Activated T-helper 1 cell treated with anti-CD3 and anti-CD28 coated beads, Interleukin-12 subunit alpha, Interleukin-12 subunit beta, Interleukin-2, Interleukin-4 antibody, amounts not matched to agents 30 ng/mL and 10 ng/mL and 1 ng/mL, durations not matched to agents 14 hours and 24 hours and 36 hours (primary cell): ENCODE measurements at regions of chr6 and their contacts with region 1.

Region 1: DNA sequence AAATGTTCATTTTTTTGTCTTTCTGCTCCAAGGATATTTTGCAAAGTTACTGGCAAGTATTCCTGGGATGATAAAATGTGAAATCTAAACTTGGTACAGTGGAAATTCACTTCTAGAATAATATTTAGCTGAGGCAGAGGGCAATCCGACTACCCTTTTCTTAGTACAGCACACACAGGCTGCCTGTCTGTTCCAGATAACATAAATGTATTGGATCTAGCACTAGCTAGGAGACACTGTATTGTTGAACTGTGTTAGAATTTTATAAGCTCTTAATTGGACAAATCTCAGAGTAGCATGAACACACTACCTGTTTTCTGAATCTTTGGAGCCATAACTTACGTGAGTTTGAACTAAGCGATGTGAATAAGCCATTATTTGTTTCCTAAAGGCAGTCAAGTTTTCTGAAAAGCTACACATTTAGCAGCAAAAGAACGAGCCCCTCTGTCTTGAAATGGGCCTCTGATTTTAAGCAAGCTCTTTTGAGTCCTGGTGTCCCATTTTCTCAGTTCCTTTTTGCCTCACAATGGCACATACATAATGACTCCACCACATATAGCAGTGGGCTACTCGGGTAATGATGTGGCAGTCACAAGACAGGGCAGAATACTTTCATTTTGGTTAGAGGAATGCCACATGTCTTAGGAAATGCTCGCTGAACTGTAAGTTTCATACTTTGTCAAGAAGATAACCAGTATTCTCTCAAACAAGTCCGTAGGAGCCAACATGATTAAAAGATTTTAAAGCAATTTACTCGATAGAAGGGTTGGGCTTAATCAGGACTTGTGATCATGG is 116.5 kb upstream of the ESR1 start:
- DNase-seq: peak; percentile 45
- H3K4me3 Mint-ChIP-seq: peak overlapping the region; percentile 78
- H3K27ac Mint-ChIP-seq: peak overlapping the region; percentile 64
- H3K4me1 Mint-ChIP-seq: peaks cover 30% of the 10 kb centered on the region
- H3K27me3 Mint-ChIP-seq: peaks cover 10% of the 10 kb centered on the region

Region 2: DNA sequence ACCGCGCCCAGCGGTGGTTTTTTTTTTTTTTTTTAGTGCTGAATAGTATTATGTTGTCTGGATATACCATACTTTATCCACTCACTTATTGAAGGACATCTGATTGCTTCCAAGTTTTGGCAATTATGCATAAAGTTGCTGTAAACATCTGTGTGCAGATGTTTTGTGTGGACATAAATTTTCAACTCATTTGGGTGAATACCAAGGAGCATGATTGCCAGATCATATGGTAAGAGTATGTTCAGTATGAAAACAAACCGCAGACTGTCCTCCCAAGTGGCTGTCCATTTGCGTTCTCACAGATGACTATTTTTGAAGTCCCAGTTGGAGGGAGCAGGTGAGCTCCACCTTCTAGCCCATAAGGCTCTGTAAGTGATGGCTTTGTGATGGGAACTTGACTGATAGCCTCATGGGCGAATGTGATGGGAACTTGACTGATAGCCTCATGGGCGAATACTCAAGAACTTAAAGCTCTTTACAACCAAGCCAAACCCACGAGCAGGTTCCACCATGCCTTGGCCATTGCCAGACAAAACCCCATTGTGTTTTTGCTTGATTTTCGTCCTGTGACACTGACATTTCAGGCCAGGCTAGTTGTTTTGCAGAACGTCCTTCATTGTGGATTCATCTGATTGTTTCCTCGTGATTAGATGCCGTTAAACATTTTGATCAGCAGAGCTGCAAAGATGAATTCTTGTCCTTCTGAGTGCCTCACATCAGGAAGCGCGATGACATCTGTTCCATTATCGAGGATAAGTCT is 350.6 kb before region 1 on chr6:
- intact Hi-C with region 1: no loop called
- DNase-seq: no peak
- H3K4me3 Mint-ChIP-seq: no peak overlapping the region
- H3K27ac Mint-ChIP-seq: no peak overlapping the region
- H3K4me1 Mint-ChIP-seq: no peaks in the 10 kb centered on the region
- H3K27me3 Mint-ChIP-seq: peaks cover 10% of the 10 kb centered on the region

Region 3: DNA sequence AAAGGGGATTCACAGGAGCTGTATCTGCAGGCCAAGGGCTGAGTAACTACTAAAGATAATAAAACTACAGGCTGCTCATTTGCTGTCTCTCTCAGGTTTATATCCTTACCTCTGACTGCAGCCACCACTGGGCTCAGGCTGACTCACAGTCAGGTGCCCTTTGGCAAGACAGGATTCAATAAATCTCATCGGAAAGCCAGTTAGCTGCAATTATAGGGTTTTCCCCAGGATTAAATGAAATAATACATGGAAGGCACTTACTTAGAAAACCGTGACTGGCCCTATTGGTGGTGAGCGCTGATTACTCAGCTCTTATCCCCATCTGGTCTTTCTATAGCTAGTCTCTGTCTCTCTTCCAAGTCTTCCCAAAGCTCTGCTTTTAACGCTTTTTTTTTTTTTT is 265.4 kb before region 1 on chr6:
- intact Hi-C with region 1: no loop called
- DNase-seq: no peak
- H3K4me3 Mint-ChIP-seq: no peak overlapping the region
- H3K27ac Mint-ChIP-seq: no peak overlapping the region
- H3K4me1 Mint-ChIP-seq: no peaks in the 10 kb centered on the region
- H3K27me3 Mint-ChIP-seq: no peaks in the 10 kb centered on the region

Region 4: DNA sequence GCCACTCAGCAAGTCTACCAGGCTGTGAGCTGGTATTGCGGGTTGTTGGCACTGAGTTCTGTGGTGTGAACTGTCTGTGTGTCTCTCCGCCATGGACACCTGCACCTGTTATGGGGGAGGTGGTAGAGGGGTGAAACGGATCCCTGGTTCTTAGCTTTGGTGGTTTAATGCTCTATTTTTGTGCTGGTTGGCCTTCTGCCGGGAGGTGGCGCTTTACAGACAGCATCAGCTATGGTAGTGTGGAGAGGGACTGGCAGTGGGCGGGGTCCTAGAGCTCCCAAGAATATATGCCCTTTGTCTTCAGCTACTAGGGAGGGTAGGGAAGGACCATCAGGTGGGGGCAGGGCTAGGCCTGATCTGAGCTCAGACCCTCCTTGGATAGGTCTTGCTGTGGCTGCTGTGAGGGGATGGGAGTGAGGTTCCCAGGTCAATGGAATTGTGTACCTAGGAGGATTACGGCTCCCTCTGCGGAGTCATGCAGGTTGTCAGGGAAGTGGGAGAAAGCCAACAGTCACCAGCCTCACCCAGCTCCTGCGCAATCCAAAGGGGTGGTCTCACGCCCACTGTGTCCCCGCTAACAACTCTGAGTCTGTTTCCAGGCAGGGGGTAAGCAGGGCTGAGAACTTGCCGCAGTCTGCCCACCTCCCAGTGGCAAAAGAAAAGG is 42.9 kb before region 1 on chr6:
- intact Hi-C with region 1: no loop called
- DNase-seq: no peak
- H3K4me3 Mint-ChIP-seq: no peak overlapping the region
- H3K27ac Mint-ChIP-seq: no peak overlapping the region
- H3K4me1 Mint-ChIP-seq: no peaks in the 10 kb centered on the region
- H3K27me3 Mint-ChIP-seq: peaks cover 14% of the 10 kb centered on the region

Region 5: DNA sequence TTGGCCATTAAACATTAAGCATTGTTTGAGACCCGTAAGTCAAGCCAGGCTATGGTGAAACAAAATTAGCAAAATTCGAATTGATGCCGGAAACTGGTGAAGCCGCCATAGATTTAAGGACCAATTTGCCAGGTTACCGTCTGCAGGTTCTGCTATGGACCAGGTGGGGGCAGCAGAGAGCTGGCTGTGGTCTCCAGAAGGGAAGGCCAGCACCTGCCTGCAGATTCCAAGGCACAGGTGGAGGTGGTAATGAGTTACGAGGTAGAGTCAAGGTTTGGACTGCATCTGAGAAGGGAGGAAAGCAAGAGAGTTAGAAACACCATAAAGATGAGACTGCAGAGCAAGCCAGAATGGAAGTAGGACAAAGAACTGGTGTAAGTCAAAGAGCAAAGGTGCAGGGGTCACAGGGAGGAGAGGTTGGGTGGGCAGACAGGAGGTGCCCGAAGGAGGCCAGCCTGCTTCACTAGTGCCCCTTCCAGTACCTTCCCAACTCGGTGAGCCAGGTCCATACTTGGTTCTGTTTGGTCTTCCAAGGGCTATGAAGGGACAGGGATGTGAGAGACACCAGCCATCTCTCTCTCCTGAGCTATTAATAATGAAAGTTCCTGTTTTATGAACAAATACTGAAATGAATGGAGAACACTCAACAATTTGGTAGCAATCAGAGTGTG is 15.1 kb before region 1 on chr6:
- intact Hi-C with region 1: loop called (anchors 1 kb)
- DNase-seq: peak; percentile 42
- H3K4me3 Mint-ChIP-seq: no peak overlapping the region
- H3K27ac Mint-ChIP-seq: no peak overlapping the region
- H3K4me1 Mint-ChIP-seq: peaks cover 14% of the 10 kb centered on the region
- H3K27me3 Mint-ChIP-seq: peaks cover 2% of the 10 kb centered on the region

Region 6: GRCh38 chr6:151716526-151717202 is 25.7 kb after region 1 on chr6:
- intact Hi-C with region 1: no loop called
- DNase-seq: no peak
- H3K4me3 Mint-ChIP-seq: no peak overlapping the region
- H3K27ac Mint-ChIP-seq: peak overlapping the region; percentile 41
- H3K4me1 Mint-ChIP-seq: peaks cover 37% of the 10 kb centered on the region
- H3K27me3 Mint-ChIP-seq: peaks cover 2% of the 10 kb centered on the region

Region 7: GRCh38 chr6:151757506-151758245 is 66.7 kb after region 1 on chr6:
- intact Hi-C with region 1: loop called (anchors 1 kb)
- DNase-seq: peak; percentile 53
- H3K4me3 Mint-ChIP-seq: peak overlapping the region; percentile 38
- H3K27ac Mint-ChIP-seq: peak overlapping the region; percentile 97
- H3K4me1 Mint-ChIP-seq: peaks cover 63% of the 10 kb centered on the region
- H3K27me3 Mint-ChIP-seq: no peaks in the 10 kb centered on the region

Region 8: GRCh38 chr6:151765444-151765886 is 74.5 kb after region 1 on chr6:
- intact Hi-C with region 1: loop called (anchors 1 kb)
- DNase-seq: peak; percentile 40
- H3K4me3 Mint-ChIP-seq: no peak overlapping the region
- H3K27ac Mint-ChIP-seq: no peak overlapping the region
- H3K4me1 Mint-ChIP-seq: peaks cover 34% of the 10 kb centered on the region
- H3K27me3 Mint-ChIP-seq: peaks cover 22% of the 10 kb centered on the region

Region 9: DNA sequence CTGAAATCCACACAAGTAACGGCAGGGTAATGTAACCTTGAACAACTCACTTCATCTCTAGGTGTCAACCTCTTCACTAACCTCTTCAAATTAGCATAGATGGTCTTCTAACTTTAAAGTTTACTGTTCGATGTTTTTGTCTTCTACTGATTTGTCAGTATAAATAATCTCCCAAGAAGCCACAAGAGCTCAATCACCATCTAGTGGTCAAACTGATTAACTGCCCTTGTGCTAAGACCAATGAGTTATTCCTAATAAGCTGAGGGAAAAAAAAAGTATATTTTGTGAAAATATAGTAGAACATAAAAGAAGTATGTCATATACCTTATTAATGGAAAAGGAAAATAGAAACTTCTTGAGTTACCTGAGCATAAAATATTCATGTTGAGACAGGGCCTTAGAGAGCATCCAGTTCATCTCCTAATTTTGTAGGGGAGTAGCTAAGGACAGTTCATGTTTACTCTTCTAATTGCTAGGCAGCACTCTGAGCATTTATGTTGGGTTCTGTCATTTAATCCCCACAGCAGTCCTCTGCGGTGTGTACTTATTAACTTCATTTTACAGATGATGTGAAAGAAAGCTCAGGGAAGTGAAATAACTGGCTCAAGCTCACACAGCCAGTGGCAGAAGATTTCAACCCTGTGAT is 433.6 kb after region 1 on chr6:
- intact Hi-C with region 1: loop called (anchors 1 kb)
- DNase-seq: no peak
- H3K4me3 Mint-ChIP-seq: no peak overlapping the region
- H3K27ac Mint-ChIP-seq: no peak overlapping the region
- H3K4me1 Mint-ChIP-seq: no peaks in the 10 kb centered on the region
- H3K27me3 Mint-ChIP-seq: no peaks in the 10 kb centered on the region